ENCODE measurements at regions of chr1 and their contacts with region 1.

Region 1: GRCh38 chr1:76023669-76024435 is 50.7 kb upstream of the ST6GALNAC3 start:
- DNase-seq: no peak
- H3K4me3 ChIP-seq: no peak overlapping the region
- H3K27ac ChIP-seq: no peak overlapping the region
- H3K4me1 ChIP-seq: no peaks in the 10 kb centered on the region
- H3K27me3 ChIP-seq: no peaks in the 10 kb centered on the region
- CTCF ChIP-seq: no peak

Region 2: GRCh38 chr1:76140227-76140626 is 116.4 kb after region 1 on chr1:
- intact Hi-C with region 1: loop called (anchors 10 kb)
- DNase-seq: no peak
- H3K4me3 ChIP-seq: no peak overlapping the region
- H3K27ac ChIP-seq: no peak overlapping the region
- H3K4me1 ChIP-seq: no peaks in the 10 kb centered on the region
- H3K27me3 ChIP-seq: no peaks in the 10 kb centered on the region
- CTCF ChIP-seq: no peak

Measured in colonic mucosa (tissue), 4 donors.